ENCODE measurements at regions of chr14 and their contacts with region 1.

Region 1: DNA sequence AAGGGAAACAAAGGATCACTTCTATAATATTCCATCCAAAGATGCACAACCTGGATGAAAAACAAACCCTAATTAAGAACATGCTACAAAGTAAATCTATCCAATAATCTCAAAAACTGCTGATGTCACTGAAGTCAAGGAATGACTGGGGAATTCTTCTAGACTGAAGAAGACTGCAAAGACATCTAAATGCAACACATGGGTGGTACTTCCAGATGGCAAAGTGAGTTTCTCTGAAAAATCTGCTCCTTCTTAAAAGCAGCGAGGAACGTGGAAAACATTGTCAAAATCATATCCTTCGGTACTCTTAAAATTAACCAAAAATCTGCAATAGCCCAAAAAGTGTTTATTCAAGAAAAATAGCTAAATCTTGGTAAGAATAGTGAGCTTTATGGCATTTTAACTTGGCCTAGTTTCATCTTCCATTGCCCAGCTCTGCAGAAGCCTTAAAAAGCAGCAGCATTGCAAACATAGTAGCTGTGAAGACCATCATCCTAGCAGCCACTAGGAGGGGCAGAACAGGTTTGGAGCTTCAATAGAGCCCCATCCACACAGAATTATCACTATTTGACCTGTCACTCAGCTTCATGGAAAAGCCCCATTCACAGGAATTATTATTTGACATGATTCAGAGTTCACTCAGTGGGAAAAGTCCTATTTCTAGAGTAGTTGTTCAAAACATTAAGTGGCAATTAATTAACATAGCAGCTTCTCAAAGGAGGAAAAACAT is 7.4 kb downstream of the CLEC14A start:
- DNase-seq: no peak
- ATAC-seq: peak; percentile 74
- H3K4me3 Mint-ChIP-seq: no peak overlapping the region
- H3K27ac Mint-ChIP-seq: no peak overlapping the region
- H3K4me1 Mint-ChIP-seq: no peaks in the 10 kb centered on the region; the same call in 1 of the 2 replicates
- H3K27me3 Mint-ChIP-seq: peaks cover 93% of the 10 kb centered on the region
- CTCF ChIP-seq: no peak

Region 2: DNA sequence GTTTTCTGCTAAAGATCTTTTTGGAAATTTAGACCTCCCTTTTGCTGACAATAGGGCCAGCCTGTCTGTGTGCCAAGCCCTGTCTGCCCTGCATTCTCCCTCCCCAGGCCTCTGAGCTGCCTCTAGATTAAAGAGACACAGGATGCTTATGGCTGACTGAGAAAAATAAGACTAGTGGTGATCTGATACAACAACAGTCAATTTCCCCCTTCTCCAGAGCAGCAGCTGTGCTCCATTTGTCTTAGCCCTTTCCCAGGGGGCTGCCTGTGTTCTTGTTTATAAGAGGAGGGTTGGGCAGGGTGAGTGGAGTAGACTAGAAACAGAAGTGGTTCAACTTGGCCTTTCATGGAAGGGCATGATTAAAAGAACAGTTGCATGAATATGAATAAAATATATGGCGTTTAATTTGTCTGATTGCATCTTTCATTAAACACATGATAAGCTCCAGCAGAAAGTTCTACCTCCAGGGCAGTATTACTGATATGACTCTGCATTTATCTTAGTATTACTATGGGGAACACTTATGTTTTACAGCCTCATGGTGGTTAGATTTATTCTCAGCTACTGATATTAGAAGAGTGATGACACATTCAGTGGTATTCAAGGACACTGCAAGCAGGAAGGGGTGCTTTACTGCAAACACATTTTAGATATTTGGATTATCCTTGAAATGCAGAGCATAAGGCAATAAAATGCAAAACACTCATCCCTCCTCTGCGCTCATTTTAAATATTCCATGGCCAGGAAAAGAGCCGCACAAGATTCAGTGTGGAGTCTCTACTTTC is 157.6 kb after region 1 on chr14:
- CTCF ChIA-PET with region 1: interaction called, 12 read pairs
- POLR2A ChIA-PET with region 1: no interaction called
- DNase-seq: peak; percentile 12
- ATAC-seq: peak; percentile 99
- H3K4me3 Mint-ChIP-seq: no peak overlapping the region
- H3K27ac Mint-ChIP-seq: no peak overlapping the region
- H3K4me1 Mint-ChIP-seq: peaks cover 4% of the 10 kb centered on the region
- H3K27me3 Mint-ChIP-seq: peaks cover 21% of the 10 kb centered on the region
- CTCF ChIP-seq: no peak

Measured in WTC11 (cell line).